ENCODE measurements at regions of chr2 and their contacts with region 1.

Region 1: GRCh38 chr2:30078521-30078920 is 68.3 kb upstream of the YPEL5 start:
- DNase-seq: no peak
- H3K4me3 ChIP-seq: no peak overlapping the region
- H3K27ac ChIP-seq: no peak overlapping the region
- H3K4me1 ChIP-seq: no peaks in the 10 kb centered on the region
- H3K27me3 ChIP-seq: peaks cover 6% of the 10 kb centered on the region; the same call in 1 of the 2 replicates
- CTCF ChIP-seq: peak; percentile 16; the same call in 1 of the 2 replicates
- EP300 ChIP-seq: no peak
- RAD21 ChIP-seq: no peak

Region 2: DNA sequence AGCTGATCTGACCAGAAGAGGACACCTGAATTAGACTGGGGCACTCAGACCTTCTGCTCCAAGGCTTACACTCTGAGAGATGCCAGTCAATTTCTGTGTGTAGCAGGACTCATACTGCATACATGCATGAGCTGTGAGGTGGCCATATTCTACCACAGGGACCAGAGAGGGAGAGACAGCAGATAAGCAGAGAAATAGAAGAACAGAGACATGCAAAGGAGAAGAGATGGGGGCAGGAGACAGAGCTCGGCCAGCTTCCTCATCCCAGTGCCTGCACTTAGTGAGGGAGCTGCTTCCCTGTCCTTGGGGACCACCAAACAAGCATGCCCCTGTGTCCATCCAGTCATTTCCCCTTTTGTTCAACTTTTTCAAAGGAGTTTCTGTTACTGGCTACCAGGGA is 83.3 kb before region 1 on chr2:
- CTCF ChIA-PET with region 1: no interaction called
- POLR2A ChIA-PET with region 1: no interaction called
- DNase-seq: no peak
- H3K4me3 ChIP-seq: no peak overlapping the region
- H3K27ac ChIP-seq: no peak overlapping the region
- H3K4me1 ChIP-seq: no peaks in the 10 kb centered on the region
- H3K27me3 ChIP-seq: peaks cover 6% of the 10 kb centered on the region; the same call in 1 of the 2 replicates
- CTCF ChIP-seq: no peak
- EP300 ChIP-seq: no peak
- RAD21 ChIP-seq: no peak

Region 3: DNA sequence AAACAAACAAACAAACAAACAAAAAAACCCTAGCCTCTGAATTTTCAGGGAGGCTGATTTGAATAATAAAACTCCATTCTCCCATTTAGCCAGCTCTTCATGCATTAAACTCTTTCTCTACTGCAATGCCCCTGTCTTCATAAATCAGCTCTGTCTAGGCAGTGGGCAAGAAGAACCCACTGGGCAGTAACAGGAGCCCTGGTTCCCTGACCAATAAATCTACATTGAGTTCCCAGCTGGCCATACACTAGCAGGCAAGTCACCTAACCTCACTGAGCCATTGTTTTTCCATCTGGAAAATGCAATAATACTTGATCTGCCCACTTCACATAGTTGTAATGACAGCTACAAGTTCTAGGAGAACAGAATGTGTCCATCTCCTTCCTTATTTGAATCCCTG is 10.7 kb after region 1 on chr2:
- CTCF ChIA-PET with region 1: interaction called, 26 read pairs
- POLR2A ChIA-PET with region 1: no interaction called
- DNase-seq: no peak
- H3K4me3 ChIP-seq: no peak overlapping the region
- H3K27ac ChIP-seq: no peak overlapping the region
- H3K4me1 ChIP-seq: no peaks in the 10 kb centered on the region; a peak in 1 of 4 replicates
- H3K27me3 ChIP-seq: no peaks in the 10 kb centered on the region
- CTCF ChIP-seq: no peak
- EP300 ChIP-seq: no peak
- RAD21 ChIP-seq: no peak

Region 4: GRCh38 chr2:30147715-30148610 is 69.4 kb after region 1 on chr2:
- CTCF ChIA-PET with region 1: no interaction called
- POLR2A ChIA-PET with region 1: no interaction called
- DNase-seq: peak; percentile 99
- H3K4me3 ChIP-seq: peak overlapping the region; percentile 82 to 99
- H3K27ac ChIP-seq: peak overlapping the region; percentile 60 to 91
- H3K4me1 ChIP-seq: peaks cover 26 to 40% of the 10 kb centered on the region in 2 experiments; a peak in 3 of 4 replicates
- H3K27me3 ChIP-seq: no peaks in the 10 kb centered on the region
- CTCF ChIP-seq: peak; percentile 68
- EP300 ChIP-seq: 0 out of 4 replicates have a peak, but pooled peaks of 1 of the 2 experiments have one; percentile 9
- RAD21 ChIP-seq: no peak

Region 5: DNA sequence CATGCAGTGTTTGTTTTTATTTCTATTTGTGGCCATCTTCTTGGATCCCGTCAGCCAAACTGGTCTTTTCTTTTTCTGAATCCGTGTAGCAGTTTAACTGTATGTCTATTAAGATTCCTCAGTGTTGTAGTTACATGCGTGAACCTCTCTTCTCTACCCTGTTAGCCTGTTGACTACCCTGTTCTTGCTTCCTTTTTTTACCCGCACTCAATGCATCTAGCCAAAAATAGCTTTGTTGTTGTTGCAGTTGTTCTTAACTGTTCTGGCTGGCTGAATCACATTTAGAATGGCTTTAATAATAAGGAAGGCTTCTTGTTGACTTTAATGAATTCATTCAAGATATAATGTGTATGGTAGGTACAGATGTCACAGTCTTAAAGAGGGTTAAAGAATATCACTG is 505.6 kb after region 1 on chr2:
- CTCF ChIA-PET with region 1: no interaction called
- POLR2A ChIA-PET with region 1: no interaction called
- DNase-seq: no peak
- H3K4me3 ChIP-seq: no peak overlapping the region
- H3K27ac ChIP-seq: no peak overlapping the region
- H3K4me1 ChIP-seq: no peaks in the 10 kb centered on the region
- H3K27me3 ChIP-seq: no peaks in the 10 kb centered on the region
- CTCF ChIP-seq: no peak
- EP300 ChIP-seq: no peak
- RAD21 ChIP-seq: no peak

Measured in SK-N-SH (cell line).